AG04450 (cell line): ENCODE measurements at regions of chr11 and their contacts with region 1.

Region 1: DNA sequence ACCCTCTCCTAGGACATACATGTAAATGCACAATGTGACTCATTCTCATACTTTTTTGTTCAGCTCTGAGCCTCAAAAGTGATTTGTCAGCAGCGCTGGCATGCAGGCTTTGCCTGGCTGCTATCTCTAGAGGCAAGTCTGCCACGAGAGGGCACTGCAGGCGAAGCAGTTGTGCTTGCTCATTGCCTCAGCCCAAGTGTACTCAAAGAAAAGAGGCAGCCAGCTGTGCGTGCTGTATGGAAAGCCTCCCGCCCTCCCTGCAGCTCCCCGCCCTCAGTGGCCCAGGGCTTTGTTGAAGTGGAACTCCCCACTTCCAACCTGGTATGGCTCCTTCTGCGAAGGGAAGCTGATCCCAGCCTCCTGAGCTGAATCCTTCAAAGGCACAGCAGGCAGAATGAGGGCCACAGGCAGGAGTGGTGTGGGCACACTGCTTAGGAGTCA is 16.3 kb downstream of the SDHAF2 start:
- DNase-seq: peak; percentile 95
- H3K4me3 ChIP-seq: no peak overlapping the region
- H3K27ac ChIP-seq: peak overlapping the region; percentile 71
- H3K27me3 ChIP-seq: no peaks in the 10 kb centered on the region
- CTCF ChIP-seq: peak; percentile 95

Region 2: GRCh38 chr11:61378713-61379313 is 67.4 kb before region 1 on chr11:
- CTCF ChIA-PET with region 1: no interaction called
- POLR2A ChIA-PET with region 1: no interaction called
- DNase-seq: peak; percentile 88
- H3K4me3 ChIP-seq: no peak overlapping the region
- H3K27ac ChIP-seq: peak overlapping the region; percentile 87
- H3K27me3 ChIP-seq: no peaks in the 10 kb centered on the region
- CTCF ChIP-seq: no peak

Region 3: GRCh38 chr11:61403658-61404057 is 42.6 kb before region 1 on chr11:
- CTCF ChIA-PET with region 1: no interaction called
- POLR2A ChIA-PET with region 1: no interaction called
- DNase-seq: no peak
- H3K4me3 ChIP-seq: no peak overlapping the region
- H3K27ac ChIP-seq: no peak overlapping the region
- H3K27me3 ChIP-seq: no peaks in the 10 kb centered on the region
- CTCF ChIP-seq: no peak

Region 4: GRCh38 chr11:61429691-61430582 is 16.3 kb before region 1 on chr11 and contains the starts of genes CPSF7 and SDHAF2:
- CTCF ChIA-PET with region 1: interaction called, 80 read pairs
- POLR2A ChIA-PET with region 1: interaction called, 4 read pairs
- DNase-seq: peak; percentile 77
- H3K4me3 ChIP-seq: peak within 1 kb of the TSS; percentile 100
- H3K27ac ChIP-seq: peak within 1 kb of the TSS; percentile 96
- H3K27me3 ChIP-seq: no peaks in the 10 kb centered on the region
- CTCF ChIP-seq: no peak
- polyA plus RNA-seq, gene CPSF7: 37.3 and 40.3 TPM in 2 replicates
- polyA plus RNA-seq, gene SDHAF2: 71.6 and 86.5 TPM in 2 replicates

Region 5: DNA sequence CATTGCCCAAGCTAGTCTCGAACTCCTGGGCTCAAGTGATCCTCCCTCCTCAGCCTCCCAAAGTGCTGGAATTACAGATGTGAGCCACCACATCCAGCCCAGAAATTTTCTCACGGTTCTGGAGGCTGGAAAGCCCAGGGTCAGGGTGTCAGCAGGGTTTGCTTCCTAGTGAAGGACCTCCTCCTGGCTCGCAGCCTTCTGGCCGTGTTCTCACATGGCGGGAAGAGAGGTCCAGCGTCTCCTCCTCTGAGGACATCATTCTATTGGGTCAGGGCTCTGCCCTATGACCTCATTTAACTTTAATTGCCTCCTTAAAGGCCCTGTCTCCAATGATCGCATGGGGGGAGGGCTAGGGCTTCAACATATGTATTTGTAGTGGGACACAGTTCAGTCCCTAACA is 21.8 kb after region 1 on chr11:
- CTCF ChIA-PET with region 1: interaction called, 77 read pairs
- POLR2A ChIA-PET with region 1: no interaction called
- DNase-seq: no peak
- H3K4me3 ChIP-seq: no peak overlapping the region
- H3K27ac ChIP-seq: no peak overlapping the region
- H3K27me3 ChIP-seq: no peaks in the 10 kb centered on the region
- CTCF ChIP-seq: no peak

Region 6: DNA sequence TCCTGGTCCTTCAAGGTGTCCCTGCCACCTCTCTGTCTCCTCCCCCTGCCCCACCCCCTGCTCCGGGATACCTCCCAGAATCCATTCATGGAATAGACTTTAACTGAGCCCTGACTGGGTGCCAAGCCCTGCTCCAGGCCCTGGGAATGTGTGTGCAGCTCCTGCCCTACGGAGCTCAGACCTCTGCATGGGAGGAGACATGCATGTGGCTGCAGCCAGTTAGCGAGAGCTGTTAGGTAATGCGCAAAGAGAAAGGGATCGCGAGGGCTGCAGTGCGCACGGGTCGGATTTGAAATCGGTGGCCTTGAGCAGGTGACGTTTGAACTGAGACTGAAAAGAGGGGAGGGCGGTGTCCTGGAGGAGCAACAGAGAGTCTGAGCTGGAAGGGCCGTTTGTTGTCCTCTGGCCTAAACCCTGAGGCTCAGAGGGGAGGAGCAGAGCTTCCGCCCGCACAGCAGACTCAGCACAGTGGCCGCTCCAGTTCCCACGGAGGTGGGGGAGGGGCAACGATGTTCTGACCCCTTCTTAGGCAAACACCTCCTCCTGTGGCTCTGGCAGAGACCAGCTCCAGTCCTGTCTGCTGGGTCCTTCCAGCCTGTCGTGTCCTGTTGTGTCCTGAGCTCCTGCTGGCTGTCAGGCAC is 42.5 kb after region 1 on chr11:
- CTCF ChIA-PET with region 1: interaction called, 11 read pairs
- POLR2A ChIA-PET with region 1: no interaction called
- DNase-seq: no peak
- H3K4me3 ChIP-seq: no peak overlapping the region
- H3K27ac ChIP-seq: no peak overlapping the region
- H3K27me3 ChIP-seq: peaks cover 5% of the 10 kb centered on the region
- CTCF ChIP-seq: no peak

Region 7: GRCh38 chr11:61639816-61640443 is 193.7 kb after region 1 on chr11:
- CTCF ChIA-PET with region 1: interaction called, 122 read pairs
- POLR2A ChIA-PET with region 1: interaction called, 3 read pairs
- DNase-seq: no peak
- H3K4me3 ChIP-seq: no peak overlapping the region
- H3K27ac ChIP-seq: no peak overlapping the region
- H3K27me3 ChIP-seq: peaks cover 23% of the 10 kb centered on the region
- CTCF ChIP-seq: no peak